T-cell (primary cell): ENCODE measurements at regions of chr7 and their contacts with region 1.

Region 1: DNA sequence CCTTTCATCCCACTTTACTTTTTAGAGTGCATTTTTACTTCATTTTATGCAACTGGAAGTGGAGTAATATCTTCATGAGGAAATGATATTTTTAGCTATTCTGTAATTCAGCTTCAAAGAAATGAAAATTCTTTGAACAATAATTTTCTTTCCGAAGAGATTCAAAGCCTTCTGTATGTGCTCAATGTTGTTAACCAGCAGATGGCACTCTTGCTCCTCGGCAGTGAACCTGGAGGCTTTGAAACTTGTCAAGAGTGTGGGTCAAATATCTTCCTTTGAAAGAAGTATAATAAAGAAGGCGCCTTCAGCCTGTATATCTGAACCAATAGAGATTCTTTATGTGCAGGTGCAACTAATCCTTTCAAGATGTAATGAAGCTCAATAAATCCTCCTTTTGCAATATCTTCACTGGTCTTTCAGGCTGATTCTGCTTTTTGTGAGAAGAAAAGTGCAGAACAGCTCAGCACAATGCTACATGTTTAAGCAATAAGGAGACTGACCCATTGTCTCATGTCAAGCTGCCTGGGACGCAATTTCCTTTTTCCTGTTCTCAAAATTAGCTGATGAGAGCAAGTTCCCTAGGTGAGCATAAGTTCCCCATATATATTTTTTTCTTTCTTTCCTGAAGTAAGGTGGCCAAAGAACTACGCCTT is 258.4 kb downstream of the SEMA3A start:
- DNase-seq: peak in 30 of 35 experiments; percentile 3 to 68 (median 26)
- ATAC-seq: peak in 2 of 4 experiments; percentile 45 to 64
- H3K4me3 ChIP-seq: no peak overlapping the region
- H3K4me3 Mint-ChIP-seq: no peak overlapping the region
- H3K27ac ChIP-seq: no peak overlapping the region
- H3K27ac Mint-ChIP-seq: no peak overlapping the region
- H3K4me1 ChIP-seq: no peaks in the 10 kb centered on the region
- H3K4me1 Mint-ChIP-seq: peaks cover 0 to 5% (median 0%) of the 10 kb centered on the region in 3 donors
- H3K27me3 ChIP-seq: no peaks in the 10 kb centered on the region
- H3K27me3 Mint-ChIP-seq: peaks cover 0 to 2% of the 10 kb centered on the region in 2 donors

Region 2: GRCh38 chr7:83271212-83272099 is 664.7 kb before region 1 on chr7:
- CTCF ChIA-PET with region 1: no interaction called
- POLR2A ChIA-PET with region 1: no interaction called
- DNase-seq: no peak
- ATAC-seq: no peak
- H3K4me3 ChIP-seq: no peak overlapping the region
- H3K4me3 Mint-ChIP-seq: no peak overlapping the region
- H3K27ac ChIP-seq: no peak overlapping the region
- H3K27ac Mint-ChIP-seq: no peak overlapping the region
- H3K4me1 ChIP-seq: no peaks in the 10 kb centered on the region
- H3K4me1 Mint-ChIP-seq: no peaks in the 10 kb centered on the region
- H3K27me3 ChIP-seq: no peaks in the 10 kb centered on the region
- H3K27me3 Mint-ChIP-seq: no peaks in the 10 kb centered on the region

Region 3: DNA sequence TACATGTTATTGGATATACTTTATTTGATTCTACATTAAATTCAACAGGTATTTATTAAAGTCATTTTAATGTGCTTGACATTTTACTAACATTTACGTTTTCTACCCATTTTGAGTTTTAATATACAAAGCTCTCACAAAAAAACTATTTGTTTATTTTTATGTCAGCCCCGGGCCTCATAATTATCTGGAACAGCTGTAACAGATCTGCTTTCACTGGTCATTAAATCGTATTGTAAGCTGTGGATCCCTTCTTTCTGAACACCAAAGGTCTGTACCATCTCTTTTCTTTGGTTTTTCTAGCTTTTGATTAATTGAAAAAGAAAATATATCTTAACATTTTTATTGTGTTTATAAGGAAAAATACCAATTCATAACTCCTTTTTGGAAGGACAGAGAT is 360.7 kb before region 1 on chr7:
- CTCF ChIA-PET with region 1: no interaction called
- POLR2A ChIA-PET with region 1: no interaction called
- DNase-seq: no peak
- ATAC-seq: no peak
- H3K4me3 ChIP-seq: no peak overlapping the region
- H3K4me3 Mint-ChIP-seq: no peak overlapping the region
- H3K27ac ChIP-seq: no peak overlapping the region
- H3K27ac Mint-ChIP-seq: no peak overlapping the region
- H3K4me1 ChIP-seq: no peaks in the 10 kb centered on the region
- H3K4me1 Mint-ChIP-seq: no peaks in the 10 kb centered on the region
- H3K27me3 ChIP-seq: no peaks in the 10 kb centered on the region
- H3K27me3 Mint-ChIP-seq: no peaks in the 10 kb centered on the region

Region 4: DNA sequence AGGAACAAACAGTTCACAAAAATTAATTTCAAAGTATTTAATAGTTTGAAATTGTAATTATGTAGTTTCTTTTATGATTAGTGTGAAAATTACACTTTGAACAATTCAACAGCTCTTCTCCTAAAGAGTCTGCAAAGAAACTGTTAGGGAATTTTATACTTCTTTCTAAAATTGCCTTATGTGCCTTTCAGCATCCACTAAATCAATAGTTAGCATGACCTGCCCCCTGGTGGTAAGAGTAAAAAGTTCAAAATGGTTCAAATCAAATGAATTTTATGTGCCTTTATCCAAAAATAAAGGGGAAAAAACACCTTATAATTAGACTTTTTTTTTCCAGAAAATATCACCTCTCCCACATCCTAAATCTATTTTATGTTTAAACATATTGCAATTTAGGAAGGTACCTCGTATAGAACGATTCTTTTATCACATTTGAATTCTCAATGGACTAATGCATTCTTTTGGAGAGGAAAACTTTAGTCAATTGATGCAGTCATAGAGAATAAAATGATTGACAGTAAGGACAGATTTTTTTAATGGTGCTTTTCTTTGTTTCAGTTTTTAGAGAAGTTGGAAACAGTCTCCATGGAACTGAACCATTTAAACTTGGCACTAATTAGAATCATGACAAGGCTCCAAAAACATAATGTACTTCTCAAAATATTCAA is 1087.0 kb after region 1 on chr7:
- CTCF ChIA-PET with region 1: interaction called, 4 to 30 read pairs
- POLR2A ChIA-PET with region 1: interaction called in 1 of 2 experiments, 3 read pairs
- DNase-seq: peak in 10 of 35 experiments; percentile 0 to 54 (median 8)
- ATAC-seq: no peak
- H3K4me3 ChIP-seq: no peak overlapping the region
- H3K4me3 Mint-ChIP-seq: no peak overlapping the region
- H3K27ac ChIP-seq: no peak overlapping the region
- H3K27ac Mint-ChIP-seq: no peak overlapping the region
- H3K4me1 ChIP-seq: no peaks in the 10 kb centered on the region
- H3K4me1 Mint-ChIP-seq: no peaks in the 10 kb centered on the region
- H3K27me3 ChIP-seq: no peaks in the 10 kb centered on the region
- H3K27me3 Mint-ChIP-seq: peaks cover 0 to 3% of the 10 kb centered on the region in 2 donors